B cell (primary cell): ENCODE measurements at regions of chr2 and their contacts with region 1.

Region 1: DNA sequence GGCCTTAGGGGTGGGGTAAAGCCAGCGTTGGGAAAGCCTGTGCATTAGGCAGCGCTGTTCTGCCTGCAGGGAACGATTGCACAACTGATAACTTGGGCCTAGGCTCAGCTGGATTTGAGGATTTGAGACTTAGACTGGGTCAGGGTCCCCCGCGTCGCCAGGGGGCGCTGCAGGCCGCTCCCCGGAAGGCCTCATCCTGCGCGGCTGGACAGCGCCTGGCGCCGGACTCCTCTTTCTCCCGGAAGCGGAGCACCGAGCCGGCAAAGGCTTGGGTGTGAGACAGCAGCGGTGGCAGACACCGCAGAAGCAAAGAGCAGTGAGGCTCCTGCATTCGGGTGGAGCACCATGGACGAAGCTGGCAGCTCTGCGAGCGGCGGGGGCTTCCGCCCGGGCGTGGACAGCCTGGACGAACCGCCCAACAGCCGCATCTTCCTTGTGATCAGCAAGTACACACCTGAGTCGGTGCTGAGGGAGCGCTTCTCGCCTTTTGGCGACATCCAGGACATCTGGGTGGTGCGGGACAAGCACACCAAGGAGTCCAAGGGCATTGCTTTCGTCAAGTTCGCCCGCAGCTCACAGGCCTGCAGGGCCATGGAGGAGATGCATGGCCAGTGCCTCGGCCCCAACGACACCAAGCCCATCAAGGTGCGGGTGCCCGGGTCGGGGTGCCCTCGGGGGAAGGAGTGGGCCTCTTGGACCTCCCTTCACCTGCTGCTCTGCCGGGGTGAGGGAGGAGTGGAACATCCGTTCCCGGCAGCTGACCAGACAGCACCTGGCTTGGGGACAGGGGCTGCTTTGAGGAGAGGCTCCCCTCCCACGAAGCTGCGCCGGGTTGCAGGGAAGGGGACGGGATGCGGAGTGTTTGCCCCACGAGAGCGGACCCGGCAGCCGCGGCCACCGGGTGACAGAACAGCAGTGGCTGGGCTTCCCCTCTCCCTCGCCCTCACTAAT is at the start of gene RBM45:
- DNase-seq: peak; percentile 87
- ATAC-seq: peak; percentile 92
- H3K4me3 ChIP-seq: peak within 1 kb of the TSS; percentile 46 to 95 (median 76)
- H3K4me3 Mint-ChIP-seq: peak within 1 kb of the TSS; percentile 97
- H3K27ac ChIP-seq: peak within 1 kb of the TSS; percentile 43 to 77
- H3K27ac Mint-ChIP-seq: peak within 1 kb of the TSS; percentile 85
- H3K4me1 ChIP-seq: peaks cover 12% of the 10 kb centered on the region in 2 donors
- H3K4me1 Mint-ChIP-seq: peaks cover 39% of the 10 kb centered on the region
- H3K27me3 ChIP-seq: no peaks in the 10 kb centered on the region
- H3K27me3 Mint-ChIP-seq: peaks cover under 1% of the 10 kb centered on the region
- CTCF ChIP-seq: peak; percentile 99
- total RNA-seq, gene RBM45: 20.5 and 24.0 TPM in 2 replicates

Region 2: GRCh38 chr2:178193823-178194599 is 81.5 kb after region 1 on chr2 and contains the start of gene OSBPL6:
- CTCF ChIA-PET with region 1: no interaction called
- POLR2A ChIA-PET with region 1: no interaction called
- intact Hi-C with region 1: loop called (anchors 1 kb)
- DNase-seq: peak; percentile 60
- ATAC-seq: peak; percentile 87
- H3K4me3 ChIP-seq: peak within 1 kb of the TSS; percentile 21 to 62 (median 48)
- H3K4me3 Mint-ChIP-seq: peak within 1 kb of the TSS; percentile 84
- H3K27ac ChIP-seq: no peak within 1 kb of the TSS
- H3K27ac Mint-ChIP-seq: no peak within 1 kb of the TSS
- H3K4me1 ChIP-seq: peaks cover 14 to 19% of the 10 kb centered on the region in 2 donors
- H3K4me1 Mint-ChIP-seq: peaks cover 17% of the 10 kb centered on the region
- H3K27me3 ChIP-seq: peaks cover 0 to 42% (median 33%) of the 10 kb centered on the region in 4 experiments
- H3K27me3 Mint-ChIP-seq: peaks cover 49% of the 10 kb centered on the region
- CTCF ChIP-seq: no peak
- total RNA-seq, gene OSBPL6: not detected in 2 replicates

Region 3: DNA sequence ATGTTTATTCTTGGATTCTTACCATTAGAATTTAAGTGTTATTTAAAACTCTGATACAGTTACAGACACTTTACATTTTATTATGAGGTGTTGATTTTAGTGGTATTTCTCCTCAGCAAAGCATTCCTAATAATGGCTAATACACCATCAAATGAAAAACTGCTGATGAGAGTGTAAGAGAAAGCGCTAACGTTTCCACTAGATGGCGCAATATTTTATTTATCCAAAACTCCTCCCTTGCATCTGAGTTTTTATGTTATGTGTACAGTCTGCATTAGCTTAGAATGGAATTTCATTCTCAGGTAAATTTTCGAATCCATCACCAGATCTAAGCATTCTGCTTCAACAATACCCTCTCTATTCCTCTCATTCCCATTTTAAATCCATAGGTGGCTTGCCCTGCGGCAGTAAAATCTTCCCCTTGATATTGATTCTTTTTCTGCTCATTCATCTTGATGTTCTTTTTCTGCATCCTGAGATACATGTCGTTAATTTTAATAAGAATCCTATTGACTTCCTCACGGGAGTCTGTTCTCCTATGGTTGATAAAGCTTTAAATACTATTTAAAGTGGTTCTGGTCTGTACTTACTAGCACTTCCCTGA is 284.6 kb after region 1 on chr2:
- CTCF ChIA-PET with region 1: no interaction called
- POLR2A ChIA-PET with region 1: no interaction called
- intact Hi-C with region 1: loop called (anchors 5 kb)
- DNase-seq: peak; percentile 60
- ATAC-seq: peak; percentile 49
- H3K4me3 ChIP-seq: no peak overlapping the region
- H3K4me3 Mint-ChIP-seq: no peak overlapping the region
- H3K27ac ChIP-seq: no peak overlapping the region
- H3K27ac Mint-ChIP-seq: no peak overlapping the region
- H3K4me1 ChIP-seq: no peaks in the 10 kb centered on the region
- H3K4me1 Mint-ChIP-seq: no peaks in the 10 kb centered on the region
- H3K27me3 ChIP-seq: no peaks in the 10 kb centered on the region
- H3K27me3 Mint-ChIP-seq: no peaks in the 10 kb centered on the region
- CTCF ChIP-seq: peak; percentile 87

Region 4: GRCh38 chr2:178450774-178451525 is 338.5 kb after region 1 on chr2 and contains the starts of genes PJVK and PRKRA:
- CTCF ChIA-PET with region 1: no interaction called
- POLR2A ChIA-PET with region 1: no interaction called
- intact Hi-C with region 1: loop called (anchors 1 kb)
- DNase-seq: peak; percentile 97
- ATAC-seq: peak; percentile 92
- H3K4me3 ChIP-seq: peak within 1 kb of the TSS; percentile 72 to 97 (median 92)
- H3K4me3 Mint-ChIP-seq: peak within 1 kb of the TSS; percentile 94
- H3K27ac ChIP-seq: peak within 1 kb of the TSS; percentile 83 to 94
- H3K27ac Mint-ChIP-seq: peak within 1 kb of the TSS; percentile 92
- H3K4me1 ChIP-seq: peaks cover 7 to 16% of the 10 kb centered on the region in 2 donors
- H3K4me1 Mint-ChIP-seq: peaks cover 29% of the 10 kb centered on the region
- H3K27me3 ChIP-seq: no peaks in the 10 kb centered on the region
- H3K27me3 Mint-ChIP-seq: no peaks in the 10 kb centered on the region
- CTCF ChIP-seq: no peak
- total RNA-seq, gene PJVK: 4.0 and 7.9 TPM in 2 replicates
- total RNA-seq, gene PRKRA: 66.0 and 71.9 TPM in 2 replicates